A673 (cell line): ENCODE measurements at regions of chr1 and their contacts with region 1.

Region 1: GRCh38 chr1:90721210-90722194 is 4.4 kb upstream of the BARHL2 start:
- DNase-seq: peak; percentile 96
- H3K4me3 ChIP-seq: peak overlapping the region; percentile 75
- H3K27ac ChIP-seq: peak overlapping the region; percentile 88
- H3K4me1 ChIP-seq: peaks cover 24% of the 10 kb centered on the region
- H3K27me3 ChIP-seq: no peaks in the 10 kb centered on the region
- CTCF ChIP-seq: peak; percentile 96

Region 2: DNA sequence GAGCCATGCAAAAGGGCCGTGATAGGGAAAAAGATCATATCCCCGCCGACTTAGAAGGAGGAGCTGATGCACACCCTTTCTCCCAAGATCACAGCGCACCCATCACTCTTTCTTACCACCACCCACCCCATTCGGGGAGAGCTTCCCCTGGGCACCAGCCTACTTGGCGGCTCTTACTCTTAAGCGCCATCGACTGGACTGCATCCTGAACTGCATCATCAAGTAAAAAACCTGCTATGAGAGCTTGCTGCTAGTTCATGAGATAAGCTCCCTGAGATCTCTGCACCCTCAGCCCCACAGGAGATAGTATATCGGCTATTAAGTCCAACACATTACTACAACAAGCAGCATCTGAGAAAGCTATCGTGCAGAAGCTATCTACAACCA is 129.5 kb before region 1 on chr1:
- CTCF ChIA-PET with region 1: no interaction called
- POLR2A ChIA-PET with region 1: no interaction called
- intact Hi-C with region 1: no loop called
- DNase-seq: no peak
- H3K4me3 ChIP-seq: no peak overlapping the region
- H3K27ac ChIP-seq: no peak overlapping the region
- H3K4me1 ChIP-seq: no peaks in the 10 kb centered on the region
- H3K27me3 ChIP-seq: no peaks in the 10 kb centered on the region
- CTCF ChIP-seq: no peak

Region 3: DNA sequence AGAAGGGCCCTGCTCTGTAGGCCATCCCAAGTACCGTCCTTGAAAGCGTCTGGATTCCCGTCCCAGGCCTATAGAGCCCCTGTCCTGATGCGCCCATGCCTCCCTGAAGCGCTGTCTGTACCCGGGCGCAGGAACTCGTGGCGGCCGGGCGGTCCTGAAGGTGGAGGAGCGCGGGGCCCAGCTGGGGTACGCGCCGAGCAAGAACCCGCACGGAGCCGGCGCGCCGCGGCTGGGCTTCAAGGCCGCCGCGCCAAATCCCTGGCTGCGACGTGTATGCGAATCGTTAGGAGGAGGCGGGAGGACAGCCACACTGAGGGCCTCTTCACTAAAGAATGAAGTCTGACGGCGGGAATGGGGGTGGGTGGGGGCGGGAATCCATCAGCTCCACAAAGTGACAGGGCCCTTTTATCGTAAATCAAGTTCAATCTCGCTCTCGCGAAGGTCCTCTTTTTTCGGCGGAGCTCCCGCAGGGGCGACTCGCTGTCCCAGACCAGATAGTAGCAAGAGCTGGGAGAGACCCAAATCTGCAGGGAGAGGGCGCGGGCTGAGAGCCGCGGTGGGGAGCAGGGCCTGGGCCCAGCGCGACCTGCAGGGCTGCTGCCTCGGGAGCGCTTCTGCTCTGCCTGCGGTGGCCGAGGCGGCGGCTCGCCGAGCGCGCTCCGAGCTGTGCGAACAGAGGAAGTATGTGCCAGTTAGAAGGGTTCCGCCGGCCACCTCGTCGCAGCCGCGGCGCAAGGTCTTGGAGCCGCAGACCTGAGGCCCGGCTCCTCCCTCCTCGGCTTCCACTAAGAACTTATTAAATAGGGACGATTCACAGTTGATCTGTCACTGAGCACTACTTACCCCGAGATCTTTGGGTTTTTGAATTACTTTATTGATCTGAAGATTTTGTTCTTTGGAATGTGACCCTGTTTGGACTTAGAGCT is 14.8 kb before region 1 on chr1:
- CTCF ChIA-PET with region 1: no interaction called
- POLR2A ChIA-PET with region 1: no interaction called
- intact Hi-C with region 1: no loop called
- DNase-seq: peak; percentile 92
- H3K4me3 ChIP-seq: peak overlapping the region; percentile 50
- H3K27ac ChIP-seq: peak overlapping the region; percentile 91
- H3K4me1 ChIP-seq: peaks cover 50% of the 10 kb centered on the region
- H3K27me3 ChIP-seq: no peaks in the 10 kb centered on the region
- CTCF ChIP-seq: no peak

Region 4: DNA sequence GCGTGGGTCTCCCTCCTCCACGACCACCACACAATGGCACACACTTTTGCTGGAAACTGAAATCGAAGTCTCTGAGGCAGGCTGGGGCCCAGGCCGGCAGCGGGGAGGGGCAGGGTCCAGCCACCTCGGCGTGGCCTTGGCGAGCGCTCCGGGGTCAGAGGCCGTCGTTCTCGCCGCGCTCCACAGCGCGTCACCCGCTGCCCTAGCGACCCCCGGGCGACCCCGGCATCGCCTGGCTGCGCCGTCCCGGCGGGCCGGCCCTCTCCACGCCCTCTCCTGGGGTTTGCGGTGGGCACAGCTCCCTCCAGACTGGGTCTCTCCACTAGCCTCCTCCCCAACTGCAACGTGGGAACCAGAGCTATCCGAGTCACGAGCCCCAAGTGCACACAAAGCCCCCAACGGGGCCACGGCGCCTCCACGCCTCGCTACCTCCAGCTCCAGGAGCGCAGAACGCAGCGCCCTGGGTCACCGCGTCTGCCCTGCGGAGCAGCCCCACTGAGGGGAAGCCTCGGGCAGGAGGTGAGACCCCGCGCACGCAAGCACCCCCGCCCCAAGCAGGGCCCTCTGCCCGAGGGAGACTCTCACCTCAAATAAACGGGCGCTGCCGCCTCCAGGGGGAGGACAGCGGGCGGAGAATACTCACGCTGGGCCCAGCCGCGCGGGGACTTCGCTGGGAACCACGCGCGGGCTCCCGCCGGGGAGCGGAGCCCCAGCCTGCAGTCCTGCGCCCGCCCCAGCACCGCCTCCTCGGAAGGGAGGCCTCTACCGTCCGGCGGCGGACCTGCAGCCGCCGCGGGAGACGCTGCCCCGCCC is 129.6 kb after region 1 on chr1:
- CTCF ChIA-PET with region 1: interaction called, 5 read pairs
- POLR2A ChIA-PET with region 1: no interaction called
- intact Hi-C with region 1: loop called (anchors 5 kb)
- DNase-seq: peak; percentile 92
- H3K4me3 ChIP-seq: peak overlapping the region; percentile 72
- H3K27ac ChIP-seq: peak overlapping the region; percentile 63
- H3K4me1 ChIP-seq: peaks cover 13% of the 10 kb centered on the region
- H3K27me3 ChIP-seq: no peaks in the 10 kb centered on the region
- CTCF ChIP-seq: peak; percentile 60

Region 5: DNA sequence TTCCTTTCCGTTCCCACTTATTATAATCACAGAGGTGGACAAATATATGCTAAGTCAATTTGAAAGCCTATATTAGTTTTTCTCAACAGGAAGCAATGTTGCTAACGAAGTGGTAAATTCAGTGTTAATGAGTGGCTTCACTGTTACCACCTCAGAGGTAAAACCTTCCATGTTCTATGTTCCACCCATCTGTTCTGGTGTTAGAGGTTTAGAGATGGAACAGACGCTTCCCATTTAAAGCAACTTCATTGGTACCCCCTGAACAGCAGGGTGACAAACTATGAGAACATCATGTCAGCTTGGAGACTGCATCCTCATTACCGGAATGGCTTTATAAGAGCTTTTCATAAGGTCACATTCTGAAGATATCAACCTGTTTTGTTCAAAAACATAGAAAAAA is 222.5 kb after region 1 on chr1:
- CTCF ChIA-PET with region 1: no interaction called
- POLR2A ChIA-PET with region 1: no interaction called
- intact Hi-C with region 1: no loop called
- DNase-seq: no peak
- H3K4me3 ChIP-seq: no peak overlapping the region
- H3K27ac ChIP-seq: no peak overlapping the region
- H3K4me1 ChIP-seq: no peaks in the 10 kb centered on the region
- H3K27me3 ChIP-seq: no peaks in the 10 kb centered on the region
- CTCF ChIP-seq: no peak

Region 6: DNA sequence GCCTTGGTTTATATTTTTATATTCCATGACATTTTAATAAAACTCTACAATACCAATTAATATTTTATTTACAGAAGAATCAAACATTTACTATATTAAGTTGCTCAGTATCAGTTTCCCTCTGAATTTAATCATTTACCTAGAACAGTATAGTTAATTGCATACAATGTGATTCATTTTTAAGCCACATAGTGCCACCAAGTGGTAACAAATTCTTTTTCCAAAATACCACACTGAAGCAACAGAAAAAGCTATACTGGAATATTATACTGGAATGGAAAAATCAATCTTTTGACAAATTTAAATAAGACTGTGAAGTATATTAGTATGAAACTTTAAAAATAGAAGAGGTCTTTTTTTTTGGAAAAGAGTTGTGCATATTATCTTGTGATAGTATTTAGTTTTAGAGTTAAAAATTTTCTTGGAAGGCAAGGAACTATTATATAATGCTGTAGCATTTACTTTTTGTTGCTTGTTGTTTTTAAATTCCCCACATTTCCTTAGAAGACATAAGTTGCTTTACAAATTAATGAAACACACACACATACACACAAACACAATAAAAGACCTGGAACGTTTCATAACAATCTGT is 243.0 kb after region 1 on chr1:
- CTCF ChIA-PET with region 1: interaction called, 16 read pairs
- POLR2A ChIA-PET with region 1: no interaction called
- intact Hi-C with region 1: loop called (anchors 1 kb)
- DNase-seq: peak; percentile 56
- H3K4me3 ChIP-seq: no peak overlapping the region
- H3K27ac ChIP-seq: no peak overlapping the region
- H3K4me1 ChIP-seq: no peaks in the 10 kb centered on the region
- H3K27me3 ChIP-seq: no peaks in the 10 kb centered on the region
- CTCF ChIP-seq: peak; percentile 75

Region 7: GRCh38 chr1:91021686-91022517 is 300.4 kb after region 1 on chr1 and contains the start of gene ZNF644:
- CTCF ChIA-PET with region 1: no interaction called
- POLR2A ChIA-PET with region 1: no interaction called
- intact Hi-C with region 1: loop called (anchors 5 kb)
- DNase-seq: peak; percentile 95
- H3K4me3 ChIP-seq: peak within 1 kb of the TSS; percentile 74
- H3K27ac ChIP-seq: peak within 1 kb of the TSS; percentile 99
- H3K4me1 ChIP-seq: peaks cover 24% of the 10 kb centered on the region
- H3K27me3 ChIP-seq: no peaks in the 10 kb centered on the region
- CTCF ChIP-seq: no peak
- total RNA-seq, gene ZNF644: 69.6 and 80.4 TPM in 2 replicates

Region 8: GRCh38 chr1:91282695-91283420 is 561.4 kb after region 1 on chr1:
- CTCF ChIA-PET with region 1: no interaction called
- POLR2A ChIA-PET with region 1: no interaction called
- intact Hi-C with region 1: loop called (anchors 10 kb)
- DNase-seq: peak; percentile 83
- H3K4me3 ChIP-seq: no peak overlapping the region
- H3K27ac ChIP-seq: no peak overlapping the region
- H3K4me1 ChIP-seq: no peaks in the 10 kb centered on the region
- H3K27me3 ChIP-seq: no peaks in the 10 kb centered on the region
- CTCF ChIP-seq: peak; percentile 84